GM23248 (cell line): ENCODE measurements at regions of chr9 and their contacts with region 1.

Region 1: DNA sequence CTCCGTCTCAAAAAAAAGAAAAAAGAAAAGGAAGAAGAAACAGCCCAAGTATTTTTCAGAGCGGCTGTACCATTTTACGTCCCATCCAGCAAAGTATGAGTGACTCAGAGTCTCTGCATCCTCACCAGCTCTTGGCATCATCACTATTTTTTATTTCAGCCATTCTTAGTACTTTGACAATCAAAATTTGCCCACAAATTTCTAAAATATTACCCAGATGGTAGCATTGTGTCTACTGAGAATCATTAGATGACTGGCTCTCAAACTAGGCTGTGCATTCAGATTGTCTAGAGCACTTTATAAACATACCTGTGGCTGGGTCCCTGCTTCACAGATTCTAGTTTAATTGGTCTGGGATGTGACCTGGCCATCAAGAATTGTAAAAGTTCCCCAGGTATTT is 21.6 kb upstream of the MELK start:
- DNase-seq: peak; percentile 50
- H3K4me3 ChIP-seq: no peak overlapping the region
- H3K27ac ChIP-seq: no peak overlapping the region
- H3K4me1 ChIP-seq: no peaks in the 10 kb centered on the region
- H3K27me3 ChIP-seq: no peaks in the 10 kb centered on the region; the same call in 1 of the 2 replicates

Region 2: GRCh38 chr9:36400332-36401163 is 150.6 kb before region 1 on chr9:
- in situ Hi-C with region 1: loop called (anchors 10 kb)
- DNase-seq: peak; percentile 93
- H3K4me3 ChIP-seq: peak overlapping the region; percentile 84
- H3K27ac ChIP-seq: peak overlapping the region; percentile 69
- H3K4me1 ChIP-seq: peaks cover 31% of the 10 kb centered on the region
- H3K27me3 ChIP-seq: no peaks in the 10 kb centered on the region

Region 3: GRCh38 chr9:36781533-36781932 is 230.4 kb after region 1 on chr9:
- in situ Hi-C with region 1: no loop called
- DNase-seq: no peak
- H3K4me3 ChIP-seq: no peak overlapping the region
- H3K27ac ChIP-seq: no peak overlapping the region
- H3K4me1 ChIP-seq: no peaks in the 10 kb centered on the region
- H3K27me3 ChIP-seq: peaks cover 41% of the 10 kb centered on the region

Region 4: DNA sequence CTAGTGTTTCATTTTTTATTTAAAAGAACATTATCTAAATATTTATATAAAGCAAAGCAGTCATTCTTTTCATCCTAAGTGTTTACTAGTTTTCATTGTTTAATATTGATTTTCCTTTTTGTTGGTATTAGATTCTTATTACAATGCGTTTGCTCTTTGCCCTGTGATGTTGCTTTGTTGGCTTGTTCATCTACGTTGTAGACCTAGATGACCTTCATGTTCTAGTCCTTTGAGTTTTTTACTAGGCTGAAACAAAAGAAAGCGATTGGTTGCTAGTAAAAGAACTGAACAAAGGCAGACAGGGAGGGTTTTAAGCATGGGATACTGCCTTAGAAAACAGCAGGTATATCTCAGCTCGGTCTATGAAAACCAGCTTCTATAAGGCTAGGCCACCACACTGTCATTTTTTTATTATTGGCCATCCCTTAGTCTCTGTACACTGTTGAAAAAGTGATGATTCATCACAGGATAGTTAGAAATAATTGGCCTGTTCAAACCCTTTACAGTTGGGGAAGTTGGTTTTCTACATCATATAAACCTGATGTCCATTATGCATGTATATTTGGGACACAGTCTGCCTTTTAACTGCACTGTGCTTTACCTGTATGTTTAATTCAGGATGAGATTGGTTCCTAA is 688.2 kb after region 1 on chr9:
- in situ Hi-C with region 1: no loop called
- DNase-seq: peak; percentile 12
- H3K4me3 ChIP-seq: no peak overlapping the region
- H3K27ac ChIP-seq: no peak overlapping the region
- H3K4me1 ChIP-seq: no peaks in the 10 kb centered on the region
- H3K27me3 ChIP-seq: no peaks in the 10 kb centered on the region